A549 (cell line): ENCODE measurements at regions of chr14 and their contacts with region 1.

Region 1: GRCh38 chr14:89165189-89166181 is 251.5 kb downstream of the FOXN3 start:
- DNase-seq: no peak
- ATAC-seq: no peak
- H3K4me3 ChIP-seq: no peak overlapping the region
- H3K27ac ChIP-seq: no peak overlapping the region
- H3K4me1 ChIP-seq: no peaks in the 10 kb centered on the region
- CTCF ChIP-seq: no peak
- EP300 ChIP-seq: no peak
- POLR2A ChIP-seq: no peak
- RAD21 ChIP-seq: no peak

Region 2: GRCh38 chr14:89175881-89176799 is 10.7 kb after region 1 on chr14:
- CTCF ChIA-PET with region 1: interaction called, 16 read pairs
- POLR2A ChIA-PET with region 1: no interaction called
- DNase-seq: no peak
- ATAC-seq: no peak
- H3K4me3 ChIP-seq: no peak overlapping the region
- H3K27ac ChIP-seq: no peak overlapping the region
- H3K4me1 ChIP-seq: no peaks in the 10 kb centered on the region
- CTCF ChIP-seq: no peak
- EP300 ChIP-seq: no peak
- POLR2A ChIP-seq: no peak
- RAD21 ChIP-seq: no peak